Heart right ventricle (tissue), 16 donors: ENCODE measurements at regions of chr4 and their contacts with region 1.

Region 1: DNA sequence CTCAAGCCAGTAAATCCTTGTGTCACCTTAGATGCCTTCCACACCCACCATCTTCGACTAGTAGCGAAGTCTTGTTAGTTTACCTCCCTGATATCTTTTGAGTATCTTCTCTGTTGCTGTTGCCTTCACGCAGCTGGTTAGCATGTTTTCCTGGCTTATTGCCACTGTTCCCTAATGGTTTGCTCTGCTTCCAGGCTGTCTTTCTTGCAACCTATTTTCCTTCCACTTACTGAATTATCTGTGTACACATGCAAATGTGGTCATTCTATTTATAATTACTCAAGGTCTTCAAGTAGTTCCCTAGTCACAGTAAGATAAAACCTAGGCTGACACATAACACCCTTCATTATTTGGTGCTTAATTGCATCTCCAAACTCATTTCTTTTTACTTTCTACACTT is 89.5 kb downstream of the UGT8 start:
- DNase-seq: no peak
- ATAC-seq: no peak
- H3K4me3 ChIP-seq: no peak overlapping the region
- H3K27ac ChIP-seq: no peak overlapping the region
- H3K4me1 ChIP-seq: peaks cover 0 to 6% (median 0%) of the 10 kb centered on the region in 9 donors
- H3K27me3 ChIP-seq: no peaks in the 10 kb centered on the region
- CTCF ChIP-seq: no peak

Region 2: DNA sequence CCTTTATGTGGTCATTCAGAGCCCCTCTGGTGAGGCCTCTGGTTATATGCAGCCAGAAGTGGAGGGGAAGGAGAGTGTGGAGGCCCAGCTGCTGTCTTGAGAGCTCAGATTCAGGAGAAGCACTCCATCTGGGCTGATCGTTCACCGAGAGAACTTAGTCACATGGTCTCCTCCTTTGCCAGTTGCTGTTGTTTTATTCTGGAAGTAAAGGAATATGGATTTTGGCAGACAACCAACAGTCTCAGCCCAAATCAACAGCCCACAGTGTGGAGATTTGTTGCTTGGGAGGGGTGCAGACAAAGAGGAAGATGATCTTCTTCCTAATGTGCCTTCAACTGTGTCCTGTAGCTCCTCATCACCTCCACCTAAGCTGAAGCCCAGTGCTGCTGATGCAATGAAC is 1283.2 kb before region 1 on chr4:
- intact Hi-C with region 1: loop called in 1 of 10 experiments (anchors 10 kb)
- DNase-seq: peak in 1 of 2 donors; percentile 18
- ATAC-seq: peak in 7 of 8 donors; percentile 35 to 79 (median 52)
- H3K4me3 ChIP-seq: no peak overlapping the region
- H3K27ac ChIP-seq: peak overlapping the region in 1 of 10 donors; percentile 3
- H3K4me1 ChIP-seq: peaks cover 0 to 12% (median 0%) of the 10 kb centered on the region in 9 donors
- H3K27me3 ChIP-seq: no peaks in the 10 kb centered on the region
- CTCF ChIP-seq: no peak

Region 3: GRCh38 chr4:114725066-114725465 is 37.0 kb after region 1 on chr4:
- intact Hi-C with region 1: no loop called
- DNase-seq: no peak
- ATAC-seq: no peak
- H3K4me3 ChIP-seq: no peak overlapping the region
- H3K27ac ChIP-seq: no peak overlapping the region
- H3K4me1 ChIP-seq: no peaks in the 10 kb centered on the region
- H3K27me3 ChIP-seq: peaks cover 0 to 3% (median 0%) of the 10 kb centered on the region in 7 donors
- CTCF ChIP-seq: no peak